HEK293T (cell line): ENCODE measurements at regions of chr11 and their contacts with region 1.

Region 1: GRCh38 chr11:65134386-65135253 is at the start of gene SYVN1:
- DNase-seq: peak; percentile 92

Region 2: GRCh38 chr11:65111744-65112414 is 22.7 kb before region 1 on chr11 and contains the start of gene TM7SF2:
- CTCF ChIA-PET with region 1: interaction called, 5 read pairs
- POLR2A ChIA-PET with region 1: interaction called, 35 read pairs
- DNase-seq: peak; percentile 91

Region 3: DNA sequence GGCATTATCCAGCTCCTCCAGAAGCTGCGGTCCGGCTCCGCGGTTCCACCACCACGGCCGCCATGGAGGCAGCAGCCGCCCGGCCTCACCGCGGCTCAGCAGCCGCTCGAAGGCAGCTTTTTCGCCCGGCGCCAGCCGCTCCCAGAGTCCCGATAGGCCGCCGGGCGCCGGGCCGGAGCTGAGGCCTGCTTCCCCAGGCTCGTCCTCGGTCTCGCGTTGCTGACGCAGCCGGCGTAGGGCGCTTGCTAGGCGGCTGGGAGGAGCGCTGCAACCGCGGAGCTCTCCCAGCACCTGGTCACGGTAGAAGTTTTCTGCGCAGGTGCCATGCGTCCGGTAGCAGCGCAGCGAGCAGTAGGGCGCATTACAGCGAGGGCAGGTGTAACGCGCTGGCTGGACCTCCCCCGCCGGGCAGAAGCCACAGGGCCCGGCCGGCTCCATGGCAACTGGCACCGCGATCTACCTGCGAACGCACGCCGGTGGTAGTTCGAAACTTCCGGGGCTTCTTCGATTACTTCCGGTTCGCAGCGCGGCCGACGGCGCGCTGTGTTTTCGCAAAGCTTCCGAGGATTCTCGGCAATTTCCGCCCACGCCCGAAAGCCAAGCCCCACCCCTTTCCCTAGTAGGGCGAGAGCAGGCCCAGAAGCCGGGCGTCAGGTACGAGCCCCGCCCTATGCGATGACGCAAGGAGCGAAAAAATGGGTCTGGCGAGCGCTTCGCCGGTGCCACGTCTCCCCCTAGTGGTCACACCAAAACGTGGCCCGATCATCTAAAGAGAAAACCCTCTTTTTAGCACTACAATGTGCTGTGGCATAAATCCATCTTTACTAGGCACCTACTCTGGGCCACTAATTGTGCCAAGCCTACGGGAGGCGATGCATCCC is 17.2 kb before region 1 on chr11 and contains the start of gene ZNHIT2:
- CTCF ChIA-PET with region 1: interaction called, 5 read pairs
- POLR2A ChIA-PET with region 1: interaction called, 56 read pairs
- DNase-seq: peak; percentile 92

Region 4: DNA sequence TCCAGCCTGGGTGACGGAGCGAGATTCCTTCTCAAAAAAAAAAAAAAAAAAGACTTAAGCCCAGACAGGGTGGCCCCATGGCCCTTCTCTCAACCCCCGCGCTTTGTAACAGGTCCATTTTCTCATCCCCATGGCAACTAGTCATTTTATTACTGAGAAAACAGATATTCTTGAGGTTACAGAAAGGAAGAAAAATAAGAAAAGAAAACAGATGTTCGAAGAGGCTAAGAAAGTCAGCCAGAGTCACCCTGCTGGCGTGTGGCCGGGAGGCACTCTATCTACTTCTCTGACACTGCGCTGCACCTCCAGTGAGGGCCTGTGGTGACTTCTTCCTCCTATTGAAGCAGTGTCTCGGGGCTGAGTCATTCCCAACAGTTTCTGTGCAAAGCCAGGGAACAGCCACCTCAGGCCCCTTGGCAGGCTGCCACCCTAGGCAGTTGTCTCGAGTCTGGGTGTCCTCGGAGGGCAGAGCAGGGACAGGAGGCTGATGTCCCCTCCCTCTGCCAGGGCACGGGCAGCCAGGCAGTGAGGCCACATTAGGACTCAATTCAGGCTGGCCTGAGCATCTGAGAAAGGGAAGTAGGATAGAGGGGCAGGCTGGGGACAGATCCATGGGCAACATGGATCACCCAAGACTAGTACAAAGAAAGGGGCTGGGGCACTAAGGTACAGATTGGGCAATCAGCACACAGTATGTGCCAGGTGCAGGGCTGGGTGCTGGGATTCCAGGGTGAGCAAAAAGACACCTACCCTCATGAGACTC is 16.1 kb after region 1 on chr11:
- CTCF ChIA-PET with region 1: interaction called, 3 read pairs
- POLR2A ChIA-PET with region 1: interaction called, 52 read pairs
- DNase-seq: peak; percentile 18

Region 5: DNA sequence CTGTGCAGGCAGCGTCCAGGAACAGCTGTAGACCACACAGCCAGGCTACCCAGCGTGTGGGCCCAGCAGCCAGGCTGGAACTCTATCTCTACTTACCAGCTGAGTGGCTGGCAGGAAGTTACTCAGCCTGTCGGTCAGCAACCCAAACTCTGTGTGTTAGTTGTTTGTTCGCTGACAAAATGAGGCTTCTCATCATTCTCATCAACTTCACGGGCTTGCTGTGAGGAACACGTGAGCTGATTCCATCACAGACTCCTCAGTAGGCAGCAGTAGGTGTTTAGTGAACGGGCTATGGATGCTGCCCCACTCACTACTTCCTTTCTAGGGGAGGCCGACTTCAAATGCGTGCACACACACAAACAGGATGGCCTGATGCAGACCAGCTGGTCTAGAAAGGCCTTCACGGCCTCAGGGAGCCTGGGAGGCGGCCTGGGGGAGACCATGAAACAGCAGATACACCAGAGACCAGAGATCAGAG is 34.6 kb after region 1 on chr11:
- CTCF ChIA-PET with region 1: no interaction called
- POLR2A ChIA-PET with region 1: interaction called, 11 read pairs
- DNase-seq: no peak

Region 6: GRCh38 chr11:65180877-65181568 is 46.4 kb after region 1 on chr11:
- CTCF ChIA-PET with region 1: no interaction called
- POLR2A ChIA-PET with region 1: interaction called, 27 read pairs
- DNase-seq: peak; percentile 87